Caki2 (cell line): ENCODE measurements at regions of chr11 and their contacts with region 1.

Region 1: GRCh38 chr11:3685923-3686322 is 14.7 kb upstream of the CHRNA10 start:
- DNase-seq: no peak

Region 2: GRCh38 chr11:3735827-3736226 is 49.9 kb after region 1 on chr11:
- in situ Hi-C with region 1: no loop called
- DNase-seq: no peak

Region 3: GRCh38 chr11:3797329-3798095 is 111.6 kb after region 1 on chr11 and contains the start of gene NUP98:
- in situ Hi-C with region 1: loop called (anchors 25 kb)
- DNase-seq: peak; percentile 100
- total RNA-seq, gene NUP98: 79.6 and 89.6 TPM in 2 replicates

Region 4: DNA sequence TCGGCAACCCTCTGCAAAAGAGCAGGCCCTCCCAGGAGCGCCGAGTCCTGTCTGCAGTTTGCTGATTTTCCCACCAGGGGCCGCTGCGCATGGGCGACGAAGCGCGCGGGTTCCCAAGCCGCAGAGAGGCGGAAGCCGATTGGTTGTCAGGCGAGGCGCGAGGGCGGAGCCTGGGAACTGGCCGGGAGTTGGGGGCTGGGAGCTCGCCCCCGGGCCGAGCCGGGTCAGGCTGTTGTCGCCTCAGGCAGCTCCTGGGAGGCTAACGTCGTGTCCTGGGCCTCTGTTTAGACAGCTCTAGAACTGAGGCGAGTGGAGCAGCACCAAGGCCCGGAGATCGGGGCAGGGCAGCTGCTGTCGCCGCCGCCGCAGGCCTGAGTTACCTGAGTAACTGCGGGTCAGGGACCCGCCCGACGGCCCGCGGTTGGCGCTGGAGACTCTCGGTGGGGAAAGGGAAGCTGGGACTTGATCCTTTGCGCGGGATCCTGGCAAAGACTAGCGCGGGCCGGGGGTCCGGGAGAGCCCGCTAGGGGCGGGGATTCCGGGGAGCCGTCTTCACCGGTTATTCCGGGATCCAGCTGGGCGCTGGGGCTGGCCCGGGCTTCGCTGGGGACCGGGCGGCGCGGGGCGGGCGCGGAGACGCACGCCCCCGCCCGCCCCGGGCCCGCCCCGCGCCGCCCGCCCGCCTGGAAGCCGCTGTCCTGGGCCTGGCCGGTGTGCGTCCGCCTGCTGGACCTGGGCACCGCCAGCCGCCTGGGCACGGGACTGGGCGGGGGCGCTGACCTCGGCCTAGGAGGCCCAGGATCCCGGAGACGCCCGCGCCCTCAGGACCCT is 169.3 kb after region 1 on chr11 and contains the start of gene STIM1:
- in situ Hi-C with region 1: no loop called
- DNase-seq: peak; percentile 93
- total RNA-seq, gene STIM1: 36.1 and 45.5 TPM in 2 replicates